CD4-positive, alpha-beta T cell (primary cell): ENCODE measurements at regions of chr5 and their contacts with region 1.

Region 1: GRCh38 chr5:7886849-7887475 is 18.0 kb downstream of the MTRR start:
- DNase-seq: peak in 3 of 14 experiments; percentile 54 to 64 (median 54)
- ATAC-seq: peak; percentile 44
- H3K4me3 ChIP-seq: no peak overlapping the region
- H3K4me3 Mint-ChIP-seq: no peak overlapping the region
- H3K27ac ChIP-seq: no peak overlapping the region
- H3K27ac Mint-ChIP-seq: no peak overlapping the region
- H3K4me1 ChIP-seq: no peaks in the 10 kb centered on the region
- H3K4me1 Mint-ChIP-seq: peaks cover 10% of the 10 kb centered on the region
- H3K27me3 ChIP-seq: no peaks in the 10 kb centered on the region
- H3K27me3 Mint-ChIP-seq: no peaks in the 10 kb centered on the region
- CTCF ChIP-seq: peak; percentile 68

Region 2: DNA sequence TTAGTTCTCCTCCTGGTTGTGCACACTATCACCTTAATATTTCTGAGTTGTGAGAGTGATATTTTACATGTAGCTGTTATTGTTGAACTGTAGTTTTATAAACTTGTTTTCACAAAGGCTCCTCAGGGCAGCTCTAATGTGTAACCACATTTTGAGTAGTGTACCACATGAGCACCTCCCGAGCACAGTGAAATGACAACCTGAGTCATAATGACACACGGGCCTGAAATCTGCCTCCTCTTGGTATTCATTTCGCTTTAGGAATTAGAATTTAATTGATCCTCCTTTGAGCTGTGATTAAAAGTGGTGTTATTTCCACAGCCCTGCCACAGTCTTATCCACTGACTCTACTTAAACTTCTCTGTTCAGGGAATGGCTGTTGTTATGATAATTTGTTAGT is 10.1 kb before region 1 on chr5:
- CTCF ChIA-PET with region 1: interaction called, 14 read pairs
- POLR2A ChIA-PET with region 1: interaction called, 3 read pairs
- intact Hi-C with region 1: no loop called
- DNase-seq: peak in 1 of 14 experiments; percentile 10
- ATAC-seq: peak; percentile 45
- H3K4me3 ChIP-seq: no peak overlapping the region
- H3K4me3 Mint-ChIP-seq: no peak overlapping the region
- H3K27ac ChIP-seq: no peak overlapping the region
- H3K27ac Mint-ChIP-seq: peak overlapping the region; percentile 7
- H3K4me1 ChIP-seq: peaks cover 26% of the 10 kb centered on the region
- H3K4me1 Mint-ChIP-seq: peaks cover 89% of the 10 kb centered on the region
- H3K27me3 ChIP-seq: no peaks in the 10 kb centered on the region
- H3K27me3 Mint-ChIP-seq: no peaks in the 10 kb centered on the region
- CTCF ChIP-seq: no peak